Heart left ventricle (tissue), 16 donors: ENCODE measurements at regions of chr11 and their contacts with region 1.

Region 1: GRCh38 chr11:15819679-15820286 is 536.6 kb downstream of the SOX6 start:
- DNase-seq: peak; percentile 76 to 88 (median 81)
- ATAC-seq: peak; percentile 85 to 93 (median 88)
- H3K4me3 ChIP-seq: no peak overlapping the region
- H3K27ac ChIP-seq: peak overlapping the region in 3 of 12 donors; percentile 17 to 55 (median 52)
- H3K4me1 ChIP-seq: peaks cover 0 to 53% (median 45%) of the 10 kb centered on the region in 12 donors
- H3K27me3 ChIP-seq: no peaks in the 10 kb centered on the region
- CTCF ChIP-seq: peak; percentile 85 to 96 (median 88)
- POLR2A ChIP-seq: no peak

Region 2: DNA sequence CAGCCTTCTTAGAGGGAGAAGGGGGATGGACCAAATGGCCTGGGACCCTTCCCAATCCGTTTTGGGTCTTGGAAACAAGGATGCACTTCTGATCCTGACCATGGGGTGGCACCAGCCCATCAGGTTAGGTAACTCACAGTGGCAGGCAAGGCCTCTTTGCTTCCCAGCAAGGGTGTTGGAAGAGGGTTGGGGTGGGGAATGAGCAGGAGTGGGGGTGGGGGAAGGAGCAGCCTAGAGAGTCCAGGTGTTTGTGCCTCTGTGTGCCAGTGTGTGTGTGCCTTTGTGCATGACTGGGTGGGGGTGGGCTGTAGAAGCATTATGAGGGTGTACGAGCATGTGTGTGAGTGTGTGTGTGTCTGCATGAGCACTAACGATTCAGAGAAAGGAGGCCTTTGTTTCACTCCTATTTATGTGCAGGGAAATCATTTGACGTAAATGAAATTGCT is 492.0 kb before region 1 on chr11:
- intact Hi-C with region 1: loop called in 2 of 10 experiments (anchors 10 kb)
- DNase-seq: peak; percentile 53 to 64 (median 58)
- ATAC-seq: peak; percentile 76 to 89 (median 84)
- H3K4me3 ChIP-seq: no peak overlapping the region
- H3K27ac ChIP-seq: no peak overlapping the region
- H3K4me1 ChIP-seq: no peaks in the 10 kb centered on the region
- H3K27me3 ChIP-seq: no peaks in the 10 kb centered on the region
- CTCF ChIP-seq: peak; percentile 43 to 76 (median 67)
- POLR2A ChIP-seq: no peak

Region 3: DNA sequence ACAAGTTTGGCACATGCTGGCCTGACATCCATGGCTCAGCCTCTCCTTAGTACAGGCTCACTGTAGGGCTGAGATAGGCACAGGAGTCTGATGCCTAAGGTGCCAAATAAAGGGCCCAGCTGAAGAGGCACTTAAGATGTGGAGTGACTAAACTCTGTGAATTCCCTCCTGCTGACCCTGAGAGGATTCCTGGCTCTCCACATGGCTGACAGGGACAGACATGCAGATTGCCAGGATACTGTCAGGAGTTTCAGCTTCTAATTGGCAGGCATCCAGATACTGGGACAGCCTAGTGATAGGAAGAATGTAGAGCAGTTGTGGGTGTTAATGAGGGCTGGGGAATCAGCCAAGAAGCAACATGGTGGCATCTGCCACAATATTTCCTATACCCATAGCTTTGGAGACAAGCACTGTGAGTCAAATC is 146.4 kb before region 1 on chr11:
- intact Hi-C with region 1: loop called in 1 of 10 experiments (anchors 5 kb)
- DNase-seq: peak in 2 of 5 donors; percentile 21 to 58
- ATAC-seq: peak; percentile 65 to 87 (median 70)
- H3K4me3 ChIP-seq: no peak overlapping the region
- H3K27ac ChIP-seq: no peak overlapping the region
- H3K4me1 ChIP-seq: peaks cover 0 to 26% (median 2%) of the 10 kb centered on the region in 12 donors
- H3K27me3 ChIP-seq: no peaks in the 10 kb centered on the region
- CTCF ChIP-seq: no peak
- POLR2A ChIP-seq: no peak

Region 4: DNA sequence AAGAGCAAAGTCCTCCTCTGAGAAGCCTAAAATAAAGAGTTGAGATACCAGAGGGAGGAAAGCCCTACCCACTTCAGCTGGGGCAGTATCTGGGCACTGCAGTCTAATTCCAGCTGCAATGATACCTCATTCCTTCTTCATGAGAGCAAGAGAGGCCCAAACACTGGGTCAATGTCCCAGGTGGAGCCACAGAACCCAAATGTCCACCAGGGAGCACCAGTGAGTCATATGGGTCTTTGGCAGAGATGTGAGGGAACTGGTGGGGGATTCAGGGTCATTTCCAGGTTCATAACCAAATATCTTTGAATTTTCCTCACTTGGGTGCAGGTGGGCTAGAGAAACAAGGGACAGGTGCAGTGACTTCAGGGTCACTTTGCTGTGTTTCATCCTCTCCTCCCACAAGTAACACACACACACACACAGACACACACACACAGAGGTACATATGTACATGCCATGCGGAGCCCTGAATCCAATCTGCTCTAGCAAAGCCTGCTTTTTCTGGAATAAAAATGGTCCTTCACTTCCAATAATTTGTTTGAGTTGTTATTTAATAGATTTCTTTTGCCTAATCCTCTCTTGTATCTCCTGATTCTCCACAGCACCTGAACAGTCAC is 48.9 kb before region 1 on chr11:
- intact Hi-C with region 1: loop called in 1 of 10 experiments (anchors 5 kb)
- DNase-seq: peak in 4 of 5 donors; percentile 29 to 47 (median 36)
- ATAC-seq: peak in 1 of 4 donors; percentile 60
- H3K4me3 ChIP-seq: no peak overlapping the region
- H3K27ac ChIP-seq: no peak overlapping the region
- H3K4me1 ChIP-seq: peaks cover 0 to 21% (median 10%) of the 10 kb centered on the region in 12 donors
- H3K27me3 ChIP-seq: no peaks in the 10 kb centered on the region
- CTCF ChIP-seq: peak; percentile 36 to 76 (median 60)
- POLR2A ChIP-seq: no peak

Region 5: GRCh38 chr11:15969281-15969680 is 149.5 kb after region 1 on chr11:
- intact Hi-C with region 1: loop called in 2 of 10 experiments (anchors 10 kb)
- DNase-seq: peak in 4 of 5 donors; percentile 64 to 79 (median 74)
- ATAC-seq: peak; percentile 85 to 92 (median 90)
- H3K4me3 ChIP-seq: peak overlapping the region in 7 of 12 donors; percentile 2 to 35 (median 16)
- H3K27ac ChIP-seq: peak overlapping the region; percentile 78 to 92 (median 86)
- H3K4me1 ChIP-seq: peaks cover 5 to 60% (median 35%) of the 10 kb centered on the region in 12 donors
- H3K27me3 ChIP-seq: no peaks in the 10 kb centered on the region
- CTCF ChIP-seq: no peak
- POLR2A ChIP-seq: peak in 1 of 2 donors; percentile 41